HepG2 (cell line): ENCODE measurements at regions of chr11 and their contacts with region 1.

Region 1: DNA sequence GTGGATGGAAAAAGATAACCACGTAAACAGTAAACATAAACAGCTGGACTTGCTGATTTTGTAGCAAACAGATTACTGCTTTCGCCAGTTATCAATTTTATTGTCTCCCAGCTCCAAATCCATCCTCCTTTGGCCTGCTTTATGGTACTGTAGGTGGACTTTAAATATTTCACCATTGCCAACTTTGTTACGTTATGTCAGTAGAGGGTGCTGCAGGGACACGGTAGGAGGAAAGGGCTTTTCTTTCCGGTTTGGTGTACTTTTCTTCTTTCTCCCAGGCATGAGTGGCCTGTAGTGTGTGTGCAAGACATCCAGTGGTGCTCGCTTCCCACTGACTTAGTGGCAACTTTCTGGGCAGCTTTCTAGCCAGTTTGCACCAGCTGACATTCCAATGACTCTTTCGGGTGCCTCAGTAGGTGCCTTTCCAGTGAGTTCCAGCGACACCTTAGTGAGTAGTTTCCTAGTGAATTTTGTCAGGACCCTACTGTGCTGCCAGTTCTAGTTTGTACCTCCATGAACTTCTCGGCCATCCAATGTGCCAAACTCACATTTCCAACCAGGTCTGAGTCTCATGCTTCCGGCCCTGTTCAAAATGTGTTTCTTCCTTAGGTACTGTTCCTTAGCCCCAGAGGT is 267.6 kb upstream of the TENM4 start:
- DNase-seq: peak; percentile 53
- ATAC-seq: peak; percentile 97
- H3K4me3 ChIP-seq: no peak overlapping the region
- H3K27ac ChIP-seq: no peak overlapping the region
- H3K4me1 ChIP-seq: no peaks in the 10 kb centered on the region
- H3K27me3 ChIP-seq: no peaks in the 10 kb centered on the region
- CTCF ChIP-seq: peak; percentile 84
- EP300 ChIP-seq: no peak
- POLR2A ChIP-seq: no peak
- RAD21 ChIP-seq: peak; percentile 66

Region 2: DNA sequence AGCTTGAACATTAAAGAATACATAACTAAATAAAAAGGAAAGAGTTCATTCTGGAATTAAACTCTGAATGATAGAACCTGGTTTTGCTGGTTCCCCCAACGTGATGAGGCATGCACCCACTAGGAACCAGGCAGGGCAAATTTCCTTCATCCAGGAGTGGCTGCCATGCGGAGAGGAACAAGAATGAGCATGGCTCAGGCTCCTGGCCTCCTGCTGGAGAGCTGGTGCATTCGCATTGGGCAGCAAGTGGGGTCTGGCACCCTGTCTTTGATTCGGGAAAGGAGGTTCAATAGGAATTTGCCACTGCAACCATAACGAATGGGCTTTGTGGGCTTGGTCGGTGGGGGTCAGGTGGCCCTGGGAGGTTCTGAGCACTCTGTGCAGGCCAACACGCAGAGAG is 97.7 kb before region 1 on chr11:
- CTCF ChIA-PET with region 1: no interaction called
- POLR2A ChIA-PET with region 1: no interaction called
- in situ Hi-C with region 1: no loop called
- intact Hi-C with region 1: no loop called
- DNase-seq: no peak
- ATAC-seq: peak; percentile 44; the same call in 1 of the 3 replicates
- H3K4me3 ChIP-seq: no peak overlapping the region
- H3K27ac ChIP-seq: no peak overlapping the region
- H3K4me1 ChIP-seq: no peaks in the 10 kb centered on the region
- H3K27me3 ChIP-seq: no peaks in the 10 kb centered on the region
- CTCF ChIP-seq: no peak
- EP300 ChIP-seq: no peak
- POLR2A ChIP-seq: no peak
- RAD21 ChIP-seq: no peak

Region 3: DNA sequence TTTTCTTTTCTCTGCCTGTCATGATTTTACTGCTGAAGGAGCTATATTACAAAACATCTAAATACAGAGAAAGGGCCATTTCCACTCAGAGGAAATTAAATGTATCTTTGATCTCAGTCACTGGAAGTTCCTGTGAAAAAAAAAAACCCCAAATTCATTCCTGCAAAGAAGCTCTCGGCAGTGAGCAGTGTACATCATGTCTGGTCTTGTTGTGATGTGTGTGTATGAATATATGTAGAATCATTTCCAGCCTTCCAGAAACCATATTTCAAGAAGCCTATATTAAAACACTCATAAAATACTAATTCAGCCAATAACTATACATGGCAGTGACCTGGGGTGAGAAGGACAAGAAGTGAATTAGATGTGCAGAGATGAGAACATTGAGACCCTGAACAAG is 125.6 kb after region 1 on chr11:
- CTCF ChIA-PET with region 1: no interaction called
- POLR2A ChIA-PET with region 1: no interaction called
- in situ Hi-C with region 1: no loop called
- intact Hi-C with region 1: no loop called
- DNase-seq: no peak
- ATAC-seq: no peak
- H3K4me3 ChIP-seq: no peak overlapping the region
- H3K27ac ChIP-seq: no peak overlapping the region
- H3K4me1 ChIP-seq: no peaks in the 10 kb centered on the region
- H3K27me3 ChIP-seq: no peaks in the 10 kb centered on the region
- CTCF ChIP-seq: no peak
- EP300 ChIP-seq: no peak
- POLR2A ChIP-seq: no peak
- RAD21 ChIP-seq: no peak

Region 4: GRCh38 chr11:80155412-80156017 is 447.1 kb after region 1 on chr11:
- CTCF ChIA-PET with region 1: interaction called, 6 read pairs
- POLR2A ChIA-PET with region 1: no interaction called
- in situ Hi-C with region 1: loop called (anchors 25 kb)
- intact Hi-C with region 1: loop called (anchors 1 kb)
- DNase-seq: peak; percentile 21
- ATAC-seq: peak; percentile 69
- H3K4me3 ChIP-seq: no peak overlapping the region
- H3K27ac ChIP-seq: no peak overlapping the region
- H3K4me1 ChIP-seq: no peaks in the 10 kb centered on the region
- H3K27me3 ChIP-seq: no peaks in the 10 kb centered on the region
- CTCF ChIP-seq: peak; percentile 42
- EP300 ChIP-seq: no peak
- POLR2A ChIP-seq: no peak
- RAD21 ChIP-seq: no peak

Region 5: DNA sequence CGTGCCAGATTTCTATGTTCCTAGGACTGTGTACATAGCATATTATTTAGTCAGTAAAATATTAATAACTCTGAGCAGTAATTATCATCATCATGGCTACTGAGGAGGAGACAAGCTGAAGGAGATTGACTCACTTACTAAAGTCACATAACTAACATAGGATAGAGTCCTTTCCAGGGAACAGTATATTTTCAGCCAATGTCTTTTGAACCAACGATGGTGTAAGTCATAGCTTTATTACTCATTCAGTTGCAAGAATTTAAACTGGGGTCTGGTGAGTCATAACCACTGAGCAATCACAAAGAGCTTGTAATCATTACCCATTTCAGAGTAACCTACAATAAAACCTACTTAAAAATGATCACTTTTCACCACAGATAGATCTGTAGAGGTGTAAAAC is 1297.2 kb after region 1 on chr11:
- CTCF ChIA-PET with region 1: interaction called, 6 read pairs
- POLR2A ChIA-PET with region 1: no interaction called
- in situ Hi-C with region 1: loop called (anchors 25 kb)
- intact Hi-C with region 1: no loop called
- DNase-seq: no peak
- ATAC-seq: no peak
- H3K4me3 ChIP-seq: no peak overlapping the region
- H3K27ac ChIP-seq: no peak overlapping the region
- H3K4me1 ChIP-seq: no peaks in the 10 kb centered on the region
- H3K27me3 ChIP-seq: no peaks in the 10 kb centered on the region
- CTCF ChIP-seq: no peak
- EP300 ChIP-seq: no peak
- POLR2A ChIP-seq: no peak
- RAD21 ChIP-seq: no peak

Region 6: DNA sequence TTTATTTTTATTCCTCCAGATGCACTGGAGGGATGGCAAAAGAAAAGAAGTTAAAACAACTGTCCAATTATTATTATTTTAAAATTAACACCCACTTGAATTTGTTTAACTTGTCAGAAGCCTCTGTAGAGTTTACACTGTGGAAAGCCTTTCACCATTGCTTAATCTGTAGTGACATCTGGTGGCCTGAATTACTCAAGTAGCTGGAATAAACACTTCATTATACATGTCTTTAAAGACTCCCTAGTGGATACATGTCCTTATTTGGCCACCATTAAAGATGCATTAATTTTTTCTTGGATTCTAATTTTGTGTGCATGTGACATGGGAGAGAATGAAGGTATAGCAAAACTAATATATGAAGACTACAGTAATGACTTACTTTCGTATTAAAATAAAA is 1528.7 kb after region 1 on chr11:
- CTCF ChIA-PET with region 1: interaction called, 12 read pairs
- POLR2A ChIA-PET with region 1: no interaction called
- in situ Hi-C with region 1: loop called (anchors 25 kb)
- intact Hi-C with region 1: no loop called
- DNase-seq: peak; percentile 49
- ATAC-seq: peak; percentile 87
- H3K4me3 ChIP-seq: no peak overlapping the region
- H3K27ac ChIP-seq: no peak overlapping the region
- H3K4me1 ChIP-seq: no peaks in the 10 kb centered on the region
- H3K27me3 ChIP-seq: no peaks in the 10 kb centered on the region
- CTCF ChIP-seq: peak; percentile 69
- EP300 ChIP-seq: no peak
- POLR2A ChIP-seq: no peak
- RAD21 ChIP-seq: peak; percentile 43; the same call in 1 of the 2 replicates

Region 7: GRCh38 chr11:81497202-81497804 is 1788.9 kb after region 1 on chr11:
- CTCF ChIA-PET with region 1: no interaction called
- POLR2A ChIA-PET with region 1: no interaction called
- in situ Hi-C with region 1: no loop called
- intact Hi-C with region 1: loop called (anchors 2 kb)
- DNase-seq: peak; percentile 24
- ATAC-seq: peak; percentile 41; the same call in 1 of the 3 replicates
- H3K4me3 ChIP-seq: no peak overlapping the region
- H3K27ac ChIP-seq: no peak overlapping the region
- H3K4me1 ChIP-seq: no peaks in the 10 kb centered on the region
- H3K27me3 ChIP-seq: no peaks in the 10 kb centered on the region; a peak in 1 of 5 replicates
- CTCF ChIP-seq: peak; percentile 54
- EP300 ChIP-seq: no peak
- POLR2A ChIP-seq: no peak
- RAD21 ChIP-seq: no peak